GM12878 (cell line): ENCODE measurements at regions of chr1 and their contacts with region 1.

Region 1: DNA sequence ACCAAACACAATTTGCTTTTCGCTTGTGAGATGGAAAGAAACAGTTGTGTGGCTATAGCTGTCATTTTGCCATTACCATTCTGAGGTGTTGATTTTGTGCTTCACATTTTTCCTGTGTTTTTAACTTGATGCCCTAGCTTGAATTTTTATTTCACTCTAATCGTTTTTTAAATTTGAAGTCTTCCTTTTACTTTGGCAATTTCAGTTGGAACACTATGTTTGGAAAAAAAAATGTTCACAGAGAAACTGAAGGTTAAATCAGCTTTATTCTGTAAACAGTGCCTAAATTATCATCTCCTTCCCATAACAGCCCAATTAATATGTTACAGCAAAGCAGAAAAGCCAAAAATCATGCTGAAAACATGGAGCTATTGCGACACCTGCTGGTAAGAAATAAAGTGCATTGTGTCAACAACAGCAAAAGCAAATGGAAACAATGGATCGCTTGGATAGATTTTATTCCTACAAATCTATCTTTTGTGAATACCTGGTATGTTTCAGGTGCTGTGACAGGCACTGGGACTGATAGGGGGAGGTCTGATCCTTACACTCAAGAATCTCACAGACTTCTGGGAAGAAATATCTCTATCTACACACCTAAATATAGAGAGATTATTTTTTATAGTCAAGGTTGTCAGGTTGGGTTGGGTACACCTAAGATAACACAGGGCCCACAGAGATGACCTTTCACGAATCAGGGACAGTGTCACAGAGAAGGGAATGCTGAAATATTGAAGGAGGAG is 16.2 kb upstream of the ERICH3 start:
- DNase-seq: no peak
- ATAC-seq: peak; percentile 78
- H3K4me3 ChIP-seq: no peak overlapping the region
- H3K27ac ChIP-seq: no peak overlapping the region
- H3K4me1 ChIP-seq: no peaks in the 10 kb centered on the region; the same call in 1 of the 2 replicates
- H3K27me3 ChIP-seq: no peaks in the 10 kb centered on the region
- CTCF ChIP-seq: peak; percentile 63 to 83 (median 78)
- EP300 ChIP-seq: no peak
- POLR2A ChIP-seq: no peak
- RAD21 ChIP-seq: peak; percentile 96

Region 2: DNA sequence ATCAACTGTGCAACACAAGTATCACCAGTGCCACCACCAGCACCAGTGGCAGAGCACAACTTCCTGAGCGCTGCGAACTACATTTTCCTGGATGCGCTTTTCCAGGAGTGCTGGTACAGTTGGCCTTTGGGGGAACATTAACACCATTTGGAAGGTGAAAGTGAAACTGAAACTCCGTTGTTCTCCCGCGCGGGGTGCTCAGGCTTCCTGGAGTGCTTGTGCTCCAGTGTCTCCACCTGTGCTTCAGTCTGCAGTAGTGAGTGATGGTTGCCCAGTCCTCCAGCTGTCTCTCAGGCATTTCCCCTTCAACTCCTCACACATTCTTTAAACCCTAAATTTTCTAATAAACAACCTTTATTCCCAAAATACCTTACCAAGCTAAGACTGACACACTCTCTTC is 679.6 kb before region 1 on chr1:
- CTCF ChIA-PET with region 1: interaction called, 5 read pairs
- POLR2A ChIA-PET with region 1: no interaction called
- RAD21 ChIA-PET with region 1: interaction called, 4 read pairs
- SMC1A ChIA-PET with region 1: no interaction called
- in situ Hi-C with region 1: no loop called
- intact Hi-C with region 1: loop called (anchors 10 kb)
- DNase-seq: no peak
- ATAC-seq: peak; percentile 39; the same call in 2 of the 3 replicates
- H3K4me3 ChIP-seq: no peak overlapping the region
- H3K27ac ChIP-seq: no peak overlapping the region
- H3K4me1 ChIP-seq: no peaks in the 10 kb centered on the region
- H3K27me3 ChIP-seq: no peaks in the 10 kb centered on the region
- CTCF ChIP-seq: no peak
- EP300 ChIP-seq: no peak
- POLR2A ChIP-seq: no peak
- RAD21 ChIP-seq: no peak

Region 3: GRCh38 chr1:74468982-74469603 is 220.7 kb before region 1 on chr1:
- CTCF ChIA-PET with region 1: interaction called, 22 read pairs
- POLR2A ChIA-PET with region 1: no interaction called
- RAD21 ChIA-PET with region 1: interaction called, 8 read pairs
- SMC1A ChIA-PET with region 1: interaction called, 23 read pairs
- in situ Hi-C with region 1: no loop called
- intact Hi-C with region 1: no loop called
- DNase-seq: no peak
- ATAC-seq: 0 out of 3 replicates have a peak, but pooled peaks have one; percentile 44
- H3K4me3 ChIP-seq: no peak overlapping the region
- H3K27ac ChIP-seq: no peak overlapping the region
- H3K4me1 ChIP-seq: no peaks in the 10 kb centered on the region
- H3K27me3 ChIP-seq: no peaks in the 10 kb centered on the region
- CTCF ChIP-seq: peak; percentile 43 to 52 (median 48); a peak in 5 of 6 replicates
- EP300 ChIP-seq: no peak
- POLR2A ChIP-seq: no peak
- RAD21 ChIP-seq: peak; percentile 66

Region 4: GRCh38 chr1:74517599-74518051 is 172.2 kb before region 1 on chr1:
- CTCF ChIA-PET with region 1: interaction called, 5 read pairs
- POLR2A ChIA-PET with region 1: no interaction called
- RAD21 ChIA-PET with region 1: interaction called, 6 read pairs
- SMC1A ChIA-PET with region 1: interaction called, 10 read pairs
- in situ Hi-C with region 1: no loop called
- intact Hi-C with region 1: loop called (anchors 5 kb)
- DNase-seq: peak; percentile 25
- ATAC-seq: peak; percentile 87
- H3K4me3 ChIP-seq: no peak overlapping the region
- H3K27ac ChIP-seq: no peak overlapping the region
- H3K4me1 ChIP-seq: no peaks in the 10 kb centered on the region
- H3K27me3 ChIP-seq: peaks cover 0 to 8% of the 10 kb centered on the region in 2 experiments; a peak in 2 of 4 replicates
- CTCF ChIP-seq: no peak
- EP300 ChIP-seq: no peak
- POLR2A ChIP-seq: no peak
- RAD21 ChIP-seq: peak; percentile 23; the same call in 1 of the 2 replicates

Region 5: GRCh38 chr1:74673351-74674111 is 16.3 kb before region 1 on chr1 and contains the start of gene ERICH3:
- CTCF ChIA-PET with region 1: interaction called, 14 read pairs
- POLR2A ChIA-PET with region 1: no interaction called
- RAD21 ChIA-PET with region 1: no interaction called
- SMC1A ChIA-PET with region 1: interaction called, 8 read pairs
- in situ Hi-C with region 1: no loop called
- intact Hi-C with region 1: no loop called
- DNase-seq: no peak
- ATAC-seq: peak; percentile 52
- H3K4me3 ChIP-seq: peak within 1 kb of the TSS; percentile 34; the same call in 1 of the 2 replicates
- H3K27ac ChIP-seq: no peak within 1 kb of the TSS
- H3K4me1 ChIP-seq: peaks cover 10% of the 10 kb centered on the region
- H3K27me3 ChIP-seq: 0 out of 4 replicates have a peak, but pooled peaks cover 2% of the 10 kb centered on the region in 2 experiments
- CTCF ChIP-seq: no peak
- EP300 ChIP-seq: no peak
- POLR2A ChIP-seq: no peak
- RAD21 ChIP-seq: no peak
- polyA plus RNA-seq, gene ERICH3: not detected

Region 6: DNA sequence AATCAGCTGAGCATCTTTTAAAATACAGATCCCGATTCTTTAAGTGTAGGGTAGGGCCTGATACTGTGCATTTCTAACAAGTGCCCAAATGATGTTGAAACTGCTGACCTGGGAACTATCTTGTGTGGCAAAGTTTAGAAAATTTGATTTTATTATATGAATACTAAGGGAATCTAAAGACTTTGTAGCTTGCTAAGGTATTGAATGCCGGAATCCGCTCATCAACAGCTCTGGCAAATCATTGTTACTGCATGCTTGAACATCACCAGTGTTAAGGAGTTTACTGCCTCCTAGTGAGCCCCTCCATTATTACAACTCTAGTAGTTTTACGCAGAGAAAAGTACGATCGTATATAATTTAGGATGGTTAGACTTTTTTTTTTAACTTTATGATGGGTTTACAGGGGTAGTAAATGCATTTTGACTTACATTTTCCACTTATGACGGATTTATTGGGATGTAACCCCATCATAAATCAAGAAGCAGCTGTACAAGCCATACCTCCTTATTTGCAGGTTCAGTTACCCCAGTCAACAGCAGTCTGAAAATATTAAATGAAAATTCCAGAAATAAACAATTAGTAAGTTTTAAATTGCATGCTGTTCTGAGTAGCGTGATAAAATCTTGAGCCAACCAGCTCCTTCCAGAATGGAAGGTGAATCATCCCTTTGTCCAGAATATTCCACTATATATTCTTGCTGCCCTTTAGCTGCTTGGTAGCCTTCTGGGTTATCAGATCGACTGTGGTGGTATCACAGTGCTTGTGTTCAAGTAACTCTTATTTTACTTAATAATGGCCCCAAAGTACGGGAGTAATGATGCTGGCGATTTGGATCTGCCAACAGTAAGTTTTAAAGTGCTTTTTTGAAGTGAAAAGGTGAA is 44.1 kb after region 1 on chr1:
- CTCF ChIA-PET with region 1: interaction called, 92 read pairs
- POLR2A ChIA-PET with region 1: no interaction called
- RAD21 ChIA-PET with region 1: interaction called, 47 read pairs
- SMC1A ChIA-PET with region 1: interaction called, 58 read pairs
- in situ Hi-C with region 1: no loop called
- intact Hi-C with region 1: loop called (anchors 2 kb)
- DNase-seq: no peak
- ATAC-seq: peak; percentile 66
- H3K4me3 ChIP-seq: peak overlapping the region; percentile 81
- H3K27ac ChIP-seq: peak overlapping the region; percentile 90
- H3K4me1 ChIP-seq: peaks cover 10% of the 10 kb centered on the region; the same call in 1 of the 2 replicates
- H3K27me3 ChIP-seq: no peaks in the 10 kb centered on the region
- CTCF ChIP-seq: peak; percentile 74 to 89 (median 86)
- EP300 ChIP-seq: no peak
- POLR2A ChIP-seq: no peak
- RAD21 ChIP-seq: peak; percentile 84